ENCODE measurements at regions of chr9 and their contacts with region 1.

Region 1: GRCh38 chr9:137046098-137046787 is at the start of gene NPDC1:
- DNase-seq: peak; percentile 83 to 94
- ATAC-seq: peak; percentile 68 to 76
- H3K4me3 ChIP-seq: peak within 1 kb of the TSS; percentile 71
- H3K27ac ChIP-seq: peak within 1 kb of the TSS; percentile 77 to 92
- H3K4me1 ChIP-seq: peaks cover 15% of the 10 kb centered on the region
- CTCF ChIP-seq: peak; percentile 70
- EP300 ChIP-seq: no peak
- POLR2A ChIP-seq: peak; percentile 60
- RAD21 ChIP-seq: peak; percentile 71 to 77
- polyA plus RNA-seq, gene NPDC1: 12.7 and 13.0 TPM in 2 replicates

Region 2: DNA sequence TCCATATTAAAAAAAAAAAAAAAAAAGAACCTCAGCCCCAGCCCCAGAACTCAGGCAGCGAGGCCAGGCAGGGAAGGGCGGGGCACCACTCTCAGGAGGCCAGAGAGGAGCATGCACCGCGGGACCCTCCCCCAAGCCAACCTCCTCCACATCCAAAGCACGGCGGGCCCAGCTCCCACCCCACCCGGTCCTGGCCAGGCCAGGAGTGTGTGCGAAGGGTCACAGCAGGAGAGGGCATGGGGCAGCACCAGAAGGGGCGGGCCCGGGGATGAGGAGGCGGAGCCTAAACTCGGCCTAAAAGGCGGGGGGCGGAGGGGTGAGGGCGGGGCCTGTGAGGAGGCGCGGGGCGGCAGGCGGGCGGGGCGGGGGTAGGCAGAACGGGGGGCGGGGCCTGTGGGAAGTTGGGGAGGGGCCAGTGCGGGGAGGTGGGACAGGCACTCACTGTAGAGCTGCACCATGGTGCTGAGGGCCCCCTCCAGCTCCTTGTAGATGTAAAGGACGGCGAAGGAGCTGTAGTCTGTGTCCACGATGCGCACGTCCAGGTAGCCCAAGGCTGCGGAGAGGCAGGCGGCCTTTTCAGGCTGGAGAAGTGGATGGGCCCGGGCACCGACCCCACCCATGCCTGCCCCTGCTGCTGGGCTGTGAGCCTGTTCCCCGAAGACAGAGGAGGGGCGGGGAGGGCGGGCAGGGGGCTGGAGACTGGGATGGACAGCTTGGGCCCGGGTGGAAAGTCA is 283.2 kb before region 1 on chr9:
- CTCF ChIA-PET with region 1: no interaction called
- POLR2A ChIA-PET with region 1: no interaction called
- DNase-seq: peak; percentile 49 to 79
- ATAC-seq: peak; percentile 21 to 68; a peak in 4 of 6 replicates
- H3K4me3 ChIP-seq: no peak overlapping the region
- H3K27ac ChIP-seq: peak overlapping the region in 1 of 2 experiments; percentile 68; a peak in 3 of 6 replicates
- H3K4me1 ChIP-seq: peaks cover 16% of the 10 kb centered on the region
- CTCF ChIP-seq: no peak
- EP300 ChIP-seq: no peak
- POLR2A ChIP-seq: peak; percentile 22; the same call in 1 of the 2 replicates
- RAD21 ChIP-seq: no peak

Region 3: GRCh38 chr9:136991993-136992818 is 54.0 kb before region 1 on chr9 and contains the start of gene PAXX:
- CTCF ChIA-PET with region 1: interaction called, 10 read pairs
- POLR2A ChIA-PET with region 1: no interaction called
- DNase-seq: peak; percentile 88 to 94
- ATAC-seq: peak; percentile 74 to 82
- H3K4me3 ChIP-seq: peak within 1 kb of the TSS; percentile 89
- H3K27ac ChIP-seq: peak within 1 kb of the TSS; percentile 91 to 97
- H3K4me1 ChIP-seq: peaks cover 45% of the 10 kb centered on the region
- CTCF ChIP-seq: no peak
- EP300 ChIP-seq: no peak
- POLR2A ChIP-seq: peak; percentile 65
- RAD21 ChIP-seq: no peak
- polyA plus RNA-seq, gene PAXX: 12.6 and 15.6 TPM in 2 replicates

Region 4: DNA sequence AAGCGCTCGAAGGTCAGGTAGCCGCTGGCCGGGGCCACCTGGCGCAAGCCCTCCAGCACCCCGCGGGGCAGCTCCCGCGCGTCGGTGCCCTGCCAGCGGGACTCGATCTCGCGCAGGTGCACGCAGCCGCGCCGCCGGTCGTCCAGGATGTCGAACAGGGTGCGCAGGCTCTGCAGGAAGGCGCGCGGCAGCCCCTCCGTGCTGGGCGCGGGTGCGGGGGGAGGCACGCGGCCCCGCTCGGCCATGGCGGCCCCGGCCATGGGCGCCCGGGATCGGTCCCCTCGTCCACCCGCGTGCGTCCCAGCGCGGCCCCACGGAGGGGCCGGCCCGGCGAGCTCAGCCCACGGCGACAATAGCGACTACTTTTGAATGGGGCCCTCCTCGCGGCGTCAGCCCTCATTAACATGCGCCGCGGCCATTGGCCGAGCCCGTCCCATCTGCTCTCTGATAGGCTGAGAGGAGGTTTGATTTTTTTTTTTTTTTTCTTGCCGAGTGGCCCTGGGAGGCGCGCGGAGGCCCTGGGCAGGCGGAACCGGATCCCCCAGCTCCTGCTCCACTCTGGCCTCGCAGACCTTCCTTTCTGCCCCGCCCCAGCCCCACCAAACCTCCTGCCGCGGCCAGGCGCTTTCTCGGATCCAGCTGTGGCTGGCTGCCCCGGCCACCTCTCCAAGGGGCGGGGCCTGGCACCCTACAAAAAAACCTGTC is 24.1 kb after region 1 on chr9 and contains the start of gene SAPCD2:
- CTCF ChIA-PET with region 1: interaction called, 656 read pairs
- POLR2A ChIA-PET with region 1: interaction called, 4 read pairs
- DNase-seq: peak; percentile 86 to 88
- ATAC-seq: peak; percentile 73 to 89
- H3K4me3 ChIP-seq: peak within 1 kb of the TSS; percentile 52
- H3K27ac ChIP-seq: peak within 1 kb of the TSS; percentile 68 to 88
- H3K4me1 ChIP-seq: peaks cover 27% of the 10 kb centered on the region
- CTCF ChIP-seq: no peak; the same call in 2 of the 3 replicates
- EP300 ChIP-seq: no peak
- POLR2A ChIP-seq: peak; percentile 29; the same call in 1 of the 2 replicates
- RAD21 ChIP-seq: no peak
- polyA plus RNA-seq, gene SAPCD2: 6.5 and 6.9 TPM in 2 replicates

Region 5: DNA sequence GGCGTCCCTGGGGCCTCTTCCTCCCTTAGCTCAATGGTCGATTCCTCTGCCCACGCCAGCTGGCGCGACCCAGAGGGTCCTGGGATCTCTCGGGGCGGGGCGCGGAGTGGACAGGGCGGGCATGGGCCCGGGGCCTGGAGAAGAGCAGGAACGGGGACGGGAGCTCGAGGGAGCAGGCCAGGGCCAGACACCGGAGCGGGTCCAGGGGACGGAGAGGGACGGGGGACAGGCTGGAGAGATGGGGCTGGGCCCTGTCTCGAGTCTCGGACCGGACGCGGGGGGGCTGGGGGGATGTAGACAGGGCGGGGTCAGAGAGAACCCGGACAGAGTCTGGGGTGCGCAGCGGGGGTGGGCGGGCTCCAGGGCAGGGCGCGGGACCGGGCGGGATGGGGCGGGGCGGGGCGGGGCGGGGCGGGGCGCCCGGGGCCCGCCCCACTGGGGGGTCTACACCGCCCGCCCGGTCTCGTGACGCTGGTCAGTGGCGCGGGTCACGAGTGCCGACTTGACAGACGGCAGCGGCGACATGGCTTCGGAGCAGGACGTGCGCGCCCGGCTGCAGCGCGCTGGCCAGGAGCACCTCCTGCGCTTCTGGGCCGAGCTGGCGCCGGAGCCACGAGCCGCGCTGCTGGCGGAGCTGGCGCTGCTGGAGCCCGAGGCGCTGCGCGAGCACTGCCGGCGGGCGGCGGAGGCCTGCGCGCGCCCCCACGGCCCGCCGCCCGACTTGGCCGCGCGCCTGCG is 30.9 kb after region 1 on chr9 and contains the start of gene UAP1L1:
- CTCF ChIA-PET with region 1: interaction called, 656 read pairs
- POLR2A ChIA-PET with region 1: no interaction called
- DNase-seq: peak in 1 of 2 experiments; percentile 44
- ATAC-seq: peak; percentile 62 to 67
- H3K4me3 ChIP-seq: peak within 1 kb of the TSS; percentile 66
- H3K27ac ChIP-seq: peak within 1 kb of the TSS; percentile 72 to 92
- H3K4me1 ChIP-seq: peaks cover 11% of the 10 kb centered on the region
- CTCF ChIP-seq: no peak
- EP300 ChIP-seq: no peak
- POLR2A ChIP-seq: no peak
- RAD21 ChIP-seq: no peak
- polyA plus RNA-seq, gene UAP1L1: 1.2 and 1.9 TPM in 2 replicates

Region 6: GRCh38 chr9:137086531-137087408 is 40.5 kb after region 1 on chr9 and contains the start of gene MAN1B1:
- CTCF ChIA-PET with region 1: interaction called, 18 read pairs
- POLR2A ChIA-PET with region 1: interaction called, 5 read pairs
- DNase-seq: peak; percentile 94 to 100
- ATAC-seq: peak; percentile 79 to 89
- H3K4me3 ChIP-seq: peak within 1 kb of the TSS; percentile 88
- H3K27ac ChIP-seq: peak within 1 kb of the TSS; percentile 95 to 100
- H3K4me1 ChIP-seq: peaks cover 41% of the 10 kb centered on the region
- CTCF ChIP-seq: no peak
- EP300 ChIP-seq: no peak
- POLR2A ChIP-seq: peak; percentile 89
- RAD21 ChIP-seq: no peak
- polyA plus RNA-seq, gene MAN1B1: 31.7 and 47.8 TPM in 2 replicates

Region 7: GRCh38 chr9:137095664-137096517 is 49.6 kb after region 1 on chr9:
- CTCF ChIA-PET with region 1: interaction called, 10 read pairs
- POLR2A ChIA-PET with region 1: no interaction called
- DNase-seq: no peak
- ATAC-seq: peak; percentile 40 to 63; a peak in 3 of 6 replicates
- H3K4me3 ChIP-seq: no peak overlapping the region
- H3K27ac ChIP-seq: no peak overlapping the region
- H3K4me1 ChIP-seq: no peaks in the 10 kb centered on the region
- CTCF ChIP-seq: no peak
- EP300 ChIP-seq: no peak
- POLR2A ChIP-seq: no peak
- RAD21 ChIP-seq: no peak

Region 8: DNA sequence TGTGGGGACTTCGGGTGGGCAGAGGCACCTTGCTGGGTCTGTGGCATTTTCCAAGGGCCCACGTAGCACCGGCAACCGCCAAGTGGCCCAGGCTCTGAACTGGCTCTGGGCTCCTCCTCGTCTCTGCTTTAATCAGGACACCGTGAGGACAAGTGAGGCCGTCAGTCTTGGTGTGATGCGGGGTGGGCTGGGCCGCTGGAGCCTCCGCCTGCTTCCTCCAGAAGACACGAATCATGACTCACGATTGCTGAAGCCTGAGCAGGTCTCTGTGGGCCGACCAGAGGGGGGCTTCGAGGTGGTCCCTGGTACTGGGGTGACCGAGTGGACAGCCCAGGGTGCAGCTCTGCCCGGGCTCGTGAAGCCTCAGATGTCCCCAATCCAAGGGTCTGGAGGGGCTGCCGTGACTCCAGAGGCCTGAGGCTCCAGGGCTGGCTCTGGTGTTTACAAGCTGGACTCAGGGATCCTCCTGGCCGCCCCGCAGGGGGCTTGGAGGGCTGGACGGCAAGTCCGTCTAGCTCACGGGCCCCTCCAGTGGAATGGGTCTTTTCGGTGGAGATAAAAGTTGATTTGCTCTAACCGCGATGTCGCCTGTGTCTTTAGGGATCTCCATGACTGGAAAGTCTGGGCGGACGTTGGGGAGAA is 62.5 kb after region 1 on chr9:
- CTCF ChIA-PET with region 1: interaction called, 10 read pairs
- POLR2A ChIA-PET with region 1: no interaction called
- DNase-seq: no peak
- ATAC-seq: no peak
- H3K4me3 ChIP-seq: no peak overlapping the region
- H3K27ac ChIP-seq: no peak overlapping the region
- H3K4me1 ChIP-seq: no peaks in the 10 kb centered on the region
- CTCF ChIP-seq: no peak
- EP300 ChIP-seq: no peak
- POLR2A ChIP-seq: no peak
- RAD21 ChIP-seq: no peak